ENCODE measurements at regions of chr5 and their contacts with region 1.

Region 1: DNA sequence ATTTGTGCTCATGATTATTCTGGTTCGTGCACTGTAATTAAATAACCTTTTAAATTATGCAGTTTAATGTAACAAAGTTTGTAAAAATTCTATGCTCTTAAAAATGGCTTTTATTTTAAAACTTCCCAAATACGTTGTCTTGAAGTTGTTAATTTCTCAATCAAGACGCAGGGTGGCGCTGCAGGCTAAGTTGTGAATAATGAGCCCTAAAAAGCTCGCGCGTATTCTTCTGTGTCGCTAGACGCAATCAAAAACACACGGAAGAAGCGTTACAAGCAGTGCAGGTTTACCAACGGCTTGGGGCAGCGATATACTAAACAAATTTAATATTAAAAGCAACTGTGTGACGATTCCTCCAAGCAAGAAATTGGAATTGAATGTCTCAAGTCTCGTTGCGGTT is at the start of gene PCDHB4:
- DNase-seq: no peak
- H3K4me3 ChIP-seq: no peak within 1 kb of the TSS; a peak in 2 of 8 replicates
- H3K27ac ChIP-seq: no peak within 1 kb of the TSS
- H3K4me1 ChIP-seq: no peaks in the 10 kb centered on the region
- H3K27me3 ChIP-seq: no peaks in the 10 kb centered on the region
- CTCF ChIP-seq: peak; percentile 10 to 70 (median 63); a peak in 3 of 4 replicates
- EP300 ChIP-seq: no peak
- POLR2A ChIP-seq: no peak
- RAD21 ChIP-seq: peak; percentile 77 to 78
- total RNA-seq, gene PCDHB4: 1.4 and 1.5 TPM in 2 replicates

Region 2: DNA sequence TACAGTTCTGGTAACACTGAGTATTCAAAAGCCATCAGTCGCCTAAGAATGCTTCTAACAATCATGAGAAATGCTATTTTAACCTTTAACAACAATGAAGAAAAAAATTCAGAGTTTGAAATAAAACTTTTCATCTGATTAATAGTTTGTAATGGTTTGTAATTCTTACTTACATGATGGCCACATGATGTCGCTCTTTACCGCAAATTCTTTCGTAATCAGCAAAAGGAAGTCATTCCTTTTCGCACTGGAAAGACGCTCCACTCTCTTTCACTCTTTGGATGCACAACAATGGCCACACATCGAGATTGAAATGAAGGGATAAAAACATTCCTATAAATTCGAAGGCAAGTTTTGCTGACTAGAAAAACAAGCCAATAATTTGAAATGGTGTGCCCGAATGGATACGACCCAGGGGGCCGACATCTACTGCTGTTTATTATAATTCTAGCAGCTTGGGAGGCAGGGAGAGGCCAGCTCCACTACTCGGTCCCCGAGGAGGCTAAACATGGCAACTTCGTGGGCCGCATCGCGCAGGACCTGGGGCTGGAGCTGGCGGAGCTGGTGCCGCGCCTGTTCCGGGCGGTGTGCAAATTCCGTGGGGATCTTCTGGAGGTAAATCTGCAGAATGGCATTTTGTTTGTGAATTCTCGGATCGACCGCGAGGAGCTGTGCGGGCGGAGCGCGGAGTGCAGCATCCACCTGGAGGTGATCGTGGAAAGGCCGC is 287.4 kb before region 1 on chr5 and contains the start of gene PCDHA7:
- CTCF ChIA-PET with region 1: no interaction called
- POLR2A ChIA-PET with region 1: no interaction called
- DNase-seq: peak in 1 of 2 experiments; percentile 59
- H3K4me3 ChIP-seq: peak within 1 kb of the TSS in 1 of 4 experiments; percentile 59; a peak in 2 of 8 replicates
- H3K27ac ChIP-seq: no peak within 1 kb of the TSS
- H3K4me1 ChIP-seq: no peaks in the 10 kb centered on the region
- H3K27me3 ChIP-seq: no peaks in the 10 kb centered on the region
- CTCF ChIP-seq: peak in 1 of 3 experiments; percentile 11; a peak in 1 of 4 replicates
- EP300 ChIP-seq: no peak
- POLR2A ChIP-seq: no peak
- RAD21 ChIP-seq: no peak; a peak in 1 of 4 replicates
- total RNA-seq, gene PCDHA7: 1.6 and 2.7 TPM in 2 replicates

Region 3: GRCh38 chr5:141094481-141095262 is 26.9 kb before region 1 on chr5 and contains the start of gene PCDHB2:
- CTCF ChIA-PET with region 1: interaction called, 23 read pairs
- POLR2A ChIA-PET with region 1: interaction called, 7 read pairs
- DNase-seq: peak; percentile 75 to 84
- H3K4me3 ChIP-seq: peak within 1 kb of the TSS; percentile 80 to 99 (median 92)
- H3K27ac ChIP-seq: peak within 1 kb of the TSS; percentile 91
- H3K4me1 ChIP-seq: no peaks in the 10 kb centered on the region; a peak in 2 of 7 replicates
- H3K27me3 ChIP-seq: no peaks in the 10 kb centered on the region
- CTCF ChIP-seq: peak; percentile 56 to 85 (median 83)
- EP300 ChIP-seq: no peak
- POLR2A ChIP-seq: peak; percentile 77 to 96
- RAD21 ChIP-seq: peak; percentile 76 to 82
- total RNA-seq, gene PCDHB2: 25.6 and 28.8 TPM in 2 replicates

Region 4: DNA sequence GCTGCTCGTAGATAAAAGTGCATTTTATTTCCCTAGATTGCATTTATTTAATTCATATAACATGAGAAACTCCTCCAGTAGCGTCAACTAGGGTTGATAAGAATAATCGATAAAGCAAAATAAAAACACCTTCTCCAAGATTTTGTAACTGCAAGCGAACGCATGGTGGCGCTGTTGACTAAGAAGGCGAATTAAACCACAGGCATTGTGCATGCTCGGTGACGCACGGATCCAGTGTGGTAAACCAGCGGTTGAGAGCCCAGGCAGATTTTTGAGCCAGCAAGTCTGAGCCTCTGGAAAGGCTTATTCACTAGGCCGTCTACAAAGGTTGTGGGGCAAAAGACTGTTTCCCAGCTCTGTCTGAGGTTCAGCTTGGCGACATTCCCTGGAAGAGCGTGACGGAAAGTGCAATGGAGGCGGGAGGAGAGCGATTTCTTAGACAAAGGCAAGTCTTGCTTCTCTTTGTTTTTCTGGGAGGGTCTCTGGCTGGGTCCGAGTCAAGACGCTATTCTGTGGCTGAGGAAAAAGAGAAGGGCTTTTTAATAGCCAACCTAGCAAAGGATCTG is 21.2 kb before region 1 on chr5 and contains the start of gene PCDHB3:
- CTCF ChIA-PET with region 1: interaction called, 23 read pairs
- POLR2A ChIA-PET with region 1: interaction called, 7 read pairs
- DNase-seq: peak; percentile 51 to 87
- H3K4me3 ChIP-seq: peak within 1 kb of the TSS in 3 of 4 experiments; percentile 8 to 39 (median 32); a peak in 4 of 8 replicates
- H3K27ac ChIP-seq: no peak within 1 kb of the TSS
- H3K4me1 ChIP-seq: no peaks in the 10 kb centered on the region; a peak in 4 of 7 replicates
- H3K27me3 ChIP-seq: no peaks in the 10 kb centered on the region
- CTCF ChIP-seq: peak; percentile 65 to 82 (median 66)
- EP300 ChIP-seq: no peak
- POLR2A ChIP-seq: peak in 1 of 2 experiments; percentile 70; a peak in 2 of 3 replicates
- RAD21 ChIP-seq: peak; percentile 69 to 72
- total RNA-seq, gene PCDHB3: 3.4 and 4.0 TPM in 2 replicates

Region 5: GRCh38 chr5:141105350-141105749 is 16.2 kb before region 1 on chr5:
- CTCF ChIA-PET with region 1: interaction called, 21 read pairs
- POLR2A ChIA-PET with region 1: interaction called, 4 read pairs
- DNase-seq: no peak
- H3K4me3 ChIP-seq: no peak overlapping the region
- H3K27ac ChIP-seq: no peak overlapping the region
- H3K4me1 ChIP-seq: no peaks in the 10 kb centered on the region; a peak in 2 of 7 replicates
- H3K27me3 ChIP-seq: no peaks in the 10 kb centered on the region
- CTCF ChIP-seq: no peak
- EP300 ChIP-seq: no peak
- POLR2A ChIP-seq: no peak
- RAD21 ChIP-seq: no peak

Region 6: DNA sequence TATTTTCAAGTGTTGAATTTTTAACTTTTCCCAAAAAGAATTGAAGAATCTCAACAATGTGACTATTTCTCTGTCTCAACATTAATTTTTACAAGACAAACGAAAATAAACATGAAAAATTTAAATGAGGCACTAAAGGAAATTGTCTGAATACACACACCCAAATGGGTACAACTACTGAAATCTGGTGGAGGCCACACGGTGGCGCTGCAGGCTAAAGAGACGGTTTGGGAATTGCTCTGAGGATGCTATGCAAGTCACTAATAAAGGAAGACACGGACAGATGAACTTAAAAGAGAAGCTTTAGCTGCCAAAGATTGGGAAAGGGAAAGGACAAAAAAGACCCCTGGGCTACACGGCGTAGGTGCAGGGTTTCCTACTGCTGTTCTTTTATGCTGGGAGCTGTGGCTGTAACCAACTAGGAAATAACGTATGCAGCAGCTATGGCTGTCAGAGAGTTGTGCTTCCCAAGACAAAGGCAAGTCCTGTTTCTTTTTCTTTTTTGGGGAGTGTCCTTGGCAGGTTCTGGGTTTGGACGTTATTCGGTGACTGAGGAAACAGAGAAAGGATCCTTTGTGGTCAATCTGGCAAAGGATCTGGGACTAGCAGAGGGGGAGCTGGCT is 70.7 kb after region 1 on chr5 and contains the start of gene PCDHB10:
- CTCF ChIA-PET with region 1: interaction called, 22 read pairs
- POLR2A ChIA-PET with region 1: no interaction called
- DNase-seq: peak in 1 of 2 experiments; percentile 92
- H3K4me3 ChIP-seq: peak within 1 kb of the TSS; percentile 14 to 46 (median 35); a peak in 6 of 8 replicates
- H3K27ac ChIP-seq: no peak within 1 kb of the TSS
- H3K4me1 ChIP-seq: no peaks in the 10 kb centered on the region; a peak in 1 of 7 replicates
- H3K27me3 ChIP-seq: no peaks in the 10 kb centered on the region
- CTCF ChIP-seq: peak; percentile 72 to 83 (median 83)
- EP300 ChIP-seq: no peak
- POLR2A ChIP-seq: no peak
- RAD21 ChIP-seq: peak; percentile 82 to 84
- total RNA-seq, gene PCDHB10: 1.8 and 1.9 TPM in 2 replicates

Measured in H1 (cell line).